K562 (cell line): ENCODE measurements at regions of chr18 and their contacts with region 1.

Region 1: DNA sequence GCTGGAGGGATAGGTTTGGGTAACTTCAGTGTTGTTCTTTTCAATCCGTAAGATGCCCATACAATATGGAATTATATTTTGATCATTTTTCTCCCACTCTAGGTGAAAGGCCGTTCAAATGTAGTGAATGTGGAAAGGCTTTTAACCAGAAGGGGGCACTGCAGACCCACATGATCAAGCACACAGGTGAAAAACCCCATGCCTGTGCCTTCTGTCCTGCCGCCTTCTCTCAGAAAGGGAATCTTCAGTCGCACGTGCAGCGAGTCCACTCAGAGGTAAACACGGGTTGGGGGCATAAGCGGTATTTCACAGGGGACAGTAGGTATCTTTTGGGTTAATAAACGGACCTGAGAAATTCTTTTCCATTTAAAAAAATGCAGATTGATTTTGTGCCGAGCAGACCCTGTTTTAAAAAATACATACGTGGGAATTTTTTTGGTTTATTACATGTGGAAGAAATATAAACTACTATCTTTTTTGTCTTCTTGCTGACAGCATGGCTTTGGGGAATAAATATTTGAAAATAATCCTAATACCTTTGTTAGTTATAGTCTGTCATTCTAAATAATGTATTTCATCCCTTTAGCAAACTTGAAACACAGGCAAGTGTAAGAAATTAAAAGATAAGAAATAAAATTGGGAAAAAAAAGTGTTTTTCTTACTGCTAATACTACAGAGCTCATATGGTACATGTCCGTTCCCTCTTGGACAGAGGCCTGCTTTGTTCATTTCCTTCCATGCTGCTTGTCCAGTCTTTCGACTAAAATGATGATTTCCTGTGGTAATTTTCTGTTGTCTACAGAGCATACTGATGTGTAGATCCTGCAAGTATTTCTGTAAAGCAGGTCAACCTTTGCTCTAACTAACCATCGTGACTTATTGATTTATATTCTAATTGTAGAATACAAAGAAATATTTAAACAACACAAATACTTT is 53.3 kb downstream of the ZNF236 start:
- DNase-seq: peak; percentile 24 to 64 (median 31)
- ATAC-seq: peak; percentile 94
- H3K4me3 ChIP-seq: no peak overlapping the region
- H3K27ac ChIP-seq: no peak overlapping the region
- H3K4me1 ChIP-seq: no peaks in the 10 kb centered on the region
- H3K27me3 ChIP-seq: no peaks in the 10 kb centered on the region
- CTCF ChIP-seq: peak; percentile 57 to 67 (median 60); a peak in 5 of 6 replicates
- EP300 ChIP-seq: no peak
- POLR2A ChIP-seq: no peak
- RAD21 ChIP-seq: peak; percentile 10 to 51; a peak in 2 of 4 replicates

Region 2: DNA sequence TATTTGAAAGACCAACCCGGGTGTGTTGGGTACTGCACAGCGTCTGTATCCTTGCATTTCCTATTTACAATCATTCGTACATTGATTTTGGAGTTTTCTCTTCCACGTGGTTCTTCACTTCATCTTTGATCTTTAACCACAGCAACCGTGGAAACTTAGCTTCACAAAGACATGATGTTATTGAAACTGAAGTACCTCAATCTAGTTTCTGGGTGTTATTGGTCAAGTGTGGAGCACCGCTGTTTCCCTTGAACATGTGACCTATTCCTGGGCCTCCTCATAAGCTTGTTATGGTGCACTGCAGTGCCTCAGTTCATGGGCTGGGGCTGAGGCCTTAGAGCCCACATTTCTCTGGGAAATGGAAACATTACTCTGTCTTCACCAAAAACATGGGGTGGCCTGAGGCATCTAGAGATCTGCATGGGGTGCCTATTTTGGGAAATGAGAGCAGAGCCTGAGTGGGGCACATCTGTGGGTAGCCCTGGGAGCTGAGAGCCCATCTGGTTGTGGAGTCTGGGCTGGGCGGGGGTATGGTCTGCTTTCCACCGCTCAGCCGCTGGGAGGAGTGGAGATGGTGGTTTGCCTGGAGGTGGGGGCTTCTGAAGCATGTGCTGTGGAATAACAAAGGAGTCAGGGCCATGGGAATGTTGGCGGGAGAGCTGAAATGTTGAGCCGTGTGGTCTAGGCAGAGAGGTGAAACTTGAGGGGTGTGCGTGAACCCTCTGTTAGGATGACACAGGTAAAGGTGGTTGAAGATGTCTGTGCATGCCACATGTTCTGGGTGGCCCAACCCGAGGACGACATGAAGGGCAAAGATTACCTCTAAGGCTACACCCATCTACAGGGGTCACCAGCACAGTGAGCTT is 16.0 kb before region 1 on chr18:
- CTCF ChIA-PET with region 1: no interaction called
- POLR2A ChIA-PET with region 1: no interaction called
- in situ Hi-C with region 1: no loop called
- intact Hi-C with region 1: no loop called
- DNase-seq: no peak
- ATAC-seq: no peak
- H3K4me3 ChIP-seq: no peak overlapping the region
- H3K27ac ChIP-seq: no peak overlapping the region
- H3K4me1 ChIP-seq: no peaks in the 10 kb centered on the region
- H3K27me3 ChIP-seq: no peaks in the 10 kb centered on the region
- CTCF ChIP-seq: no peak
- EP300 ChIP-seq: no peak
- POLR2A ChIP-seq: no peak
- RAD21 ChIP-seq: no peak

Region 3: GRCh38 chr18:77054606-77055428 is 179.2 kb after region 1 on chr18:
- CTCF ChIA-PET with region 1: no interaction called
- POLR2A ChIA-PET with region 1: no interaction called
- in situ Hi-C with region 1: no loop called
- intact Hi-C with region 1: loop called (anchors 5 kb)
- DNase-seq: peak; percentile 18 to 47 (median 26)
- ATAC-seq: peak; percentile 91
- H3K4me3 ChIP-seq: no peak overlapping the region
- H3K27ac ChIP-seq: no peak overlapping the region
- H3K4me1 ChIP-seq: no peaks in the 10 kb centered on the region
- H3K27me3 ChIP-seq: peaks cover 6 to 34% of the 10 kb centered on the region in 2 experiments; a peak in 4 of 5 replicates
- CTCF ChIP-seq: peak; percentile 56 to 67 (median 62)
- EP300 ChIP-seq: no peak
- POLR2A ChIP-seq: no peak
- RAD21 ChIP-seq: peak; percentile 33 to 67